Left lung (tissue), 14 donors: ENCODE measurements at regions of chr16 and their contacts with region 1.

Region 1: GRCh38 chr16:67672739-67673662 is 6.4 kb downstream of the C16orf86 start:
- DNase-seq: peak in 3 of 4 donors; percentile 65 to 81 (median 75)
- ATAC-seq: peak; percentile 74
- H3K4me3 ChIP-seq: no peak overlapping the region
- H3K27ac ChIP-seq: peak overlapping the region; percentile 77 to 86
- H3K4me1 ChIP-seq: peaks cover 28 to 62% of the 10 kb centered on the region in 2 donors
- H3K27me3 ChIP-seq: no peaks in the 10 kb centered on the region
- CTCF ChIP-seq: peak; percentile 75 to 85

Region 2: GRCh38 chr16:67822511-67822910 is 149.5 kb after region 1 on chr16:
- intact Hi-C with region 1: loop called in 1 of 2 experiments (anchors 10 kb)
- DNase-seq: no peak
- ATAC-seq: no peak
- H3K4me3 ChIP-seq: no peak overlapping the region
- H3K27ac ChIP-seq: no peak overlapping the region
- H3K4me1 ChIP-seq: no peaks in the 10 kb centered on the region
- H3K27me3 ChIP-seq: no peaks in the 10 kb centered on the region
- CTCF ChIP-seq: no peak

Region 3: DNA sequence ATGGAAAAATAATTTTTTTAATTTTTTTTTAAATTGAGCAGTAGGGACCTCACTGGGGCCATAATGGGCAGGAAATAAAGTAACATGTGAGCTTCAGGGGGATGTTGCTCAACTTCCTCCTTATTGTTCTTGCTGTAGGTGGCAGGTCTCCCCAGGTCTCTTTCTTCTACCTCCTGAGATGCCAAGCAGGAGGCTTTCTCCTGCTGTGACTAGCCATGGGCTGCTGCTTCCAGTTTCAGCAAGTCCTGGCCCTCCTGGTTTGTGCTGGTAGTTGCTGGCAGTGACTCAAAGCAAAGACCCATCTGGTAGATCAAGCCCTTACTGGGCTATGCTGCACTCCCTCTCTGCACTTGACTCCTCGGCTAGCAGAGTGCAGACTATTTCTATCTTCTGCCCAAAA is 340.4 kb after region 1 on chr16:
- intact Hi-C with region 1: no loop called
- DNase-seq: no peak
- ATAC-seq: peak; percentile 14
- H3K4me3 ChIP-seq: no peak overlapping the region
- H3K27ac ChIP-seq: peak overlapping the region in 1 of 2 donors; percentile 82
- H3K4me1 ChIP-seq: peaks cover 0 to 15% of the 10 kb centered on the region in 2 donors
- H3K27me3 ChIP-seq: no peaks in the 10 kb centered on the region
- CTCF ChIP-seq: no peak